Ascending aorta (tissue), 2 donors: ENCODE measurements at regions of chr6 and their contacts with region 1.

Region 1: DNA sequence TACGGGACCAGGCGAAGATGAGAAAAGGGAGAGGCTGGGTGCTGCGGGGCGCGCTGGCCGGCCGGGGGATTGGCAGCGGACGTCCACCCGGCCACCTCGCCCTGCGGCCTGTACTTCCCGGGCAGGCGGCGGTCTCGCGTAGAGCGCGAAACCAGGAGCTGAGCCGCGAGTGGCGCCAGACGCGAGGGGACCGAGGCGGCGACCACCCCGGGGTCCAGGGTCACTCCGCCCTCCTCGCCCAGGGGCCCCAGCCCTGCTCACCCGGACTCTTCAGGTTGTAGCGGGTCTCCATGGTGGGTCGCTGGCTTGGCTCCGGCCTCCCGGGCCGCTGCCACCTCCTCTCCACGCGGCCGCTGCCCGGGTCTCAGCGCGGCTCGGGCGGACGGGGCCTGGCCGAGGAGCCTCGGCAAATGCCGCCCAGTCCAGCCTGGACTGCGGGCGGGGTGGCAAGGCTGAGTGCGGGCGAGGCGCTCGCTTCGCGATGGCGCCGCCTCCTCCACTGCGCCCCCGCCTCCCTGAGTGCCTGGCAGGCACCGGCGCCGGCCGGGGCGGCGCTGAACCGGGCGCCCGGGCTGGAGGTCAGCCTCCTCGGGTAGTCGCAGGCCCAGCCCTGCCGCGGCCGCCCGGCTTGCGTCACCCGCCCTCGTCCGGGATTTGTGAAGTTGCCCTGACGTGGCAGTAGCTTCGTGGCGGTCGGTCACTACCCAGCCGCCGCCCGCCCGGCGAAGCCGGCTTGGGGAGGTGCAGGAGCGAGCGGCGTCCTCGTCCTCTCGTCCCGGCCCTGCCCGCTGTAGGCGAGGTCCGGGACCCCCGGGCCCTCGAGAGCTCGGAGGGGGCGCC is at the start of gene UBE2J1:
- DNase-seq: peak; percentile 88 to 98
- H3K4me3 ChIP-seq: peak within 1 kb of the TSS; percentile 58 to 97
- H3K27ac ChIP-seq: peak within 1 kb of the TSS; percentile 99 to 100
- H3K4me1 ChIP-seq: peaks cover 3 to 19% of the 10 kb centered on the region in 2 donors
- H3K27me3 ChIP-seq: no peaks in the 10 kb centered on the region
- CTCF ChIP-seq: no peak
- total RNA-seq, gene UBE2J1: 29.5 TPM

Region 2: GRCh38 chr6:88963139-88964090 is 389.1 kb before region 1 on chr6 and contains the start of gene RNGTT:
- intact Hi-C with region 1: loop called (anchors 5 kb)
- DNase-seq: peak; percentile 96 to 99
- H3K4me3 ChIP-seq: peak within 1 kb of the TSS; percentile 89 to 93
- H3K27ac ChIP-seq: peak within 1 kb of the TSS; percentile 79 to 86
- H3K4me1 ChIP-seq: peaks cover 0 to 6% of the 10 kb centered on the region in 2 donors
- H3K27me3 ChIP-seq: no peaks in the 10 kb centered on the region
- CTCF ChIP-seq: no peak
- total RNA-seq, gene RNGTT: 13.4 TPM

Region 3: GRCh38 chr6:89022798-89023197 is 329.7 kb before region 1 on chr6:
- intact Hi-C with region 1: loop called (anchors 5 kb)
- DNase-seq: peak in 1 of 2 donors; percentile 62
- H3K4me3 ChIP-seq: no peak overlapping the region
- H3K27ac ChIP-seq: peak overlapping the region; percentile 75 to 81
- H3K4me1 ChIP-seq: peaks cover 7 to 33% of the 10 kb centered on the region in 2 donors
- H3K27me3 ChIP-seq: no peaks in the 10 kb centered on the region
- CTCF ChIP-seq: no peak

Region 4: DNA sequence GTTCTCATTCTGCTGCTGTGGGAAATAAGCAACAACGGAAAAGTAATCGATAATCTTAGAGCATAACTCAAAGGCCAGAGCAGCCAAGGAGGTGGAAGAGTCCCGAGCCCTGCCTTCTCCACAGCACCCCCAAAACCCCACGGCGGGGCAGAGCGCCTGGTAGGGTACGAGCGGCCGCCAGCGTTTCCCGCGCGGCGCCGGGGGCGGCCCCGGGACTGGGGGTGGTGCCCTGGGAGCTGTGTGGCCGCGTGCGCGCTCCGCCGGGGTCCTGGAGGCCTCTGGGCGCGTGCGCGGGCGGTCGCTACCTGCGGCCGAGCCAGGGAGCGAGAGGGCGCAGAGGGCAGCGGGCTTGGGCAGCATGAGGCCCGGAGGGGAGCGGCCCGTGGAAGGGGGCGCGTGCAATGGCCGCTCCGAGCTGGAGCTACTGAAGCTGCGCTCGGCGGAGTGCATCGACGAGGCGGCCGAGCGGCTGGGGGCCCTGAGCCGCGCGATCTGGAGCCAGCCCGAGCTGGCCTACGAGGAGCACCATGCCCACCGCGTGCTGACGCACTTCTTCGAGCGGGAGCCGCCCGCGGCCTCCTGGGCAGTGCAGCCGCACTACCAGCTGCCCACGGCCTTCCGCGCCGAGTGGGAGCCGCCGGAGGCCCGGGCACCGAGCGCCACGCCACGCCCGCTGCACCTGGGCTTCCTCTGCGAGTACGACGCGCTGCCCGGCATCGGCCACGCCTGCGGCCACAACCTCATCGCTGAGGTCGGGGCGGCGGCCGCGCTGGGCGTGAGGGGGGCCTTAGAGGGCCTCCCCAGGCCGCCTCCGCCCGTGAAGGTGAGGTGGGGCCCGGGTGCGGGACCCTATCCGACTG is 206.5 kb before region 1 on chr6 and contains the start of gene PM20D2:
- intact Hi-C with region 1: loop called (anchors 5 kb)
- DNase-seq: peak in 1 of 2 donors; percentile 82
- H3K4me3 ChIP-seq: peak within 1 kb of the TSS; percentile 86 to 97
- H3K27ac ChIP-seq: peak within 1 kb of the TSS; percentile 92 to 98
- H3K4me1 ChIP-seq: peaks cover 0 to 11% of the 10 kb centered on the region in 2 donors
- H3K27me3 ChIP-seq: no peaks in the 10 kb centered on the region
- CTCF ChIP-seq: no peak
- total RNA-seq, gene PM20D2: 8.8 TPM

Region 5: DNA sequence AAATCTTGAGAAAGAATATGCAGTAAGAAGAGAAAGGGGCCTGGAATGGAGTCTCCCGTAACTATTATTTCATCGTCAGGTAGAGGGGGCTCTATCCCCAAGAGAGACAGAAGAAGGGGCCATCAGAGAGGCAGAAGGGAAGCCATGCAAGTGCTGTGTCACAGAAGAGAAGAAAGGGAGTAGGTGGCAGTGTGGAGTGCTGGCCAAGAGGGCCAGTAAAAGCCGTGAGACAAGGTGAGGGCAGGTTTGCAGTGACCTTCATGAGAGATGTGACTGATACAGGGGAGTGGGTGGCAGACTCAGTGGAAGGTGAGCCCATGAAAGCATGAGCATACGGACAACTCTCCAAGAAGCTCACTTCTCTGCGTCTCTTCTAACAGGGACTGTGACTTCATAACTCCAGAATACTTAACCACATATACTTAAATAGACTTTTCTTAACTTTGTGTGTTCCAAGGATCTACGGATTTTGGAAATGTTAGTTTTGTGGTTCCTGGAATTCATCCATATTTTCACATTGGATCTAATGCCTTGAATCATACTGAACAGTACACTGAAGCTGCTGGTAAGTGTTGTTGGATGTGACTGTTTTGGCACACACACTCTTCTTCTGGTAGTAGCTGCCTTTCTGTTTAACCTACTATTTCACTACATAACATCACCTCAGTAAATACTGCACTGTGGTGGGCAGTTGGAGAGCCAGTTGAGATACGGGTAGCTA is 191.0 kb before region 1 on chr6:
- intact Hi-C with region 1: loop called (anchors 5 kb)
- DNase-seq: no peak
- H3K4me3 ChIP-seq: peak overlapping the region in 1 of 2 donors; percentile 47
- H3K27ac ChIP-seq: peak overlapping the region; percentile 88 to 94
- H3K4me1 ChIP-seq: peaks cover 5 to 19% of the 10 kb centered on the region in 2 donors
- H3K27me3 ChIP-seq: no peaks in the 10 kb centered on the region
- CTCF ChIP-seq: no peak

Region 6: DNA sequence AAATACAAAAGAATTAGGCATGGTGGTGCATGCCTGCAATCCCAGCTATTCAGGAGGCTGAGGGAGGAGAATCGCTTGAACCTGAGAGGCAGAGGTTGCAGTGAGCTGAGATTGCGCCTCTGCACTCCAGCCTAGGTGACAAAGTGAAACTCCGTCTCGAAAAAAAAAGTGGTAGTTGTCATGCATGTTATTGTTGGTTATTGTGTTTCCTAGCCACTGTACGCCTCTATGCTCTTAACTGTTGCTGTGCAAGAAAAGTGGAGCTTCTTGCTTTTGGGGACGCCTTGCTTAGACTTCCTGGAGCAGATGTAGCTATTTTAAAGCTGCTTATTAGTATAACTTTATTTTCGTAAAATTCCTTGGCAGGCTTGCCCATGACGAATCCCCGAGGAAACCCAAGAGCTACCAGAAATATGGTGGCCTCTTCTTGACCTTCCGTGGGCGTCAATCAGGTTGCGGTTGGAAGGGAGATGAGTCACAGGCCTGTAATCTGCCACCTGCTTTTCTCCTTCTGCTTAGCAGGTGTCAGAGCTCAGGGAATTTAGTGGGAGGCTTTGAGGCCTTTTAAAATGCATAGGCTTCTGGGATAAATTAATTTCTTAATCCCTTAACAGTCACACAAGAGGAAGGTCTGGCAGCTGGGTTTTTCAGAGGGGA is 54.7 kb before region 1 on chr6:
- intact Hi-C with region 1: loop called (anchors 5 kb)
- DNase-seq: peak; percentile 38 to 85
- H3K4me3 ChIP-seq: peak overlapping the region in 1 of 2 donors; percentile 18
- H3K27ac ChIP-seq: peak overlapping the region; percentile 17 to 64
- H3K4me1 ChIP-seq: peaks cover 9 to 18% of the 10 kb centered on the region in 2 donors
- H3K27me3 ChIP-seq: no peaks in the 10 kb centered on the region
- CTCF ChIP-seq: no peak

Region 7: DNA sequence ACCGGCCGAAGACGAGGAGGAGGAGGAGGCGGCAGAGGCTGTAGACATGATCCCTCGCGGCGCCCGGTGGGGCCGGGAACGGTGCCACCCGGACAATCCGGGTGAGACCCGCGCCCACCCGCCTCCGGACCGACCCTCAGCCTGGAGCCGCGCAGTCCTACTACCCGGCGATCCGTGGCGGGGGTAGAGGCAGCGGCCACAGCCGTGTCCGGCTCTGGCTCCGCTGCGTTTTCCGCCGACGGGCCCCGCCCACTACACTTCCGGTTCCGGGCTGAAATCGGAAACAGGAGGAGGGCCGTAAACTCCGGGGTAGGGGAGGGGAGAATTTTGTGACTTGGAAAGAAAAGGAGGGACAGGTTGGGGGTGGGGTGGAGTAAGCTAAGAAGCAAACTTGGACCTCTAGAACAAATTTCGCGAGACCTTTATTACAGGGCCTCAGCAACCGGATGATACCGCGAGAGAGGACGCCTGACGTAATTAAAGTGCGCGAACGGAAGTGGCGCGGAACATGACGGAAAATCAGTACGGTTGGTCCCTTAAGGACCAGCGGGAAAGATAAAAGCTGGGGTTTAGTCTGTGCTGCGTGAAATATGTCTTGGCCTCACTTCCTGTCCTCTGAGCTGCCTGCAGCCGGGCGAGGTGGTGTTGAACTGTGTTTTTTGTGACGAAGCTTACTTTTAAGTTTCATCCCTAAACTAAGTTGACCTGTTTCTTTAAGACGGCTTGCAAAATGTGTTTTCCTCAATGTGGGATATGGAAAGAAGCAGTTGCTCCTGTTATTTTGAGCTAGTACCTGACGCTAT is 1234.5 kb after region 1 on chr6 and contains the start of gene MAP3K7:
- intact Hi-C with region 1: loop called (anchors 5 kb)
- DNase-seq: peak; percentile 82 to 97
- H3K4me3 ChIP-seq: peak within 1 kb of the TSS; percentile 82 to 93
- H3K27ac ChIP-seq: peak within 1 kb of the TSS; percentile 89 to 93
- H3K4me1 ChIP-seq: peaks cover 4 to 16% of the 10 kb centered on the region in 2 donors
- H3K27me3 ChIP-seq: no peaks in the 10 kb centered on the region
- CTCF ChIP-seq: no peak
- total RNA-seq, gene MAP3K7: 18.3 TPM